Lower leg skin (tissue), 4 donors: ENCODE measurements at regions of chr7 and their contacts with region 1.

Region 1: GRCh38 chr7:101140339-101140699 is 13.4 kb downstream of the SERPINE1 start:
- DNase-seq: no peak
- H3K4me3 ChIP-seq: no peak overlapping the region
- CTCF ChIP-seq: no peak
- POLR2A ChIP-seq: no peak

Region 2: DNA sequence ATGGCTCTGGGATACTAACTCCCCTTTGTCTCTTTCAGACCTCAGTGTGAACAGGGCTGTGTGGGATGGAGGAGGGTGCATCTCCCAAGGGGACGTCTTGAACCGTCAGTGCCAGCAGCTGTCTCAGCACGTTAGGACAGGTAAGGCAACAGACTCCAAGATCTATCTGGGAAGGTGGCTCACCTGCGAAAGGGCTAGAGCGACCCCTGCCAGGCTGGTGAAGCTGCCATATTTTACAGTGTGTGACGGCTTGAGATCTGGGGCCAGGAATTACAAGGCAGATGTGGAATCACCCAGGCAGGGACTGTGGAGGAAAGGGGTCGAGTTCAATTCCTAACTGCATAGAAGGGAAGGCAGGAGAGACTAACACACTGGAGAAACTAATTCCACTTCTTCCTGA is 109.2 kb before region 1 on chr7:
- intact Hi-C with region 1: no loop called
- DNase-seq: no peak
- H3K4me3 ChIP-seq: no peak overlapping the region
- CTCF ChIP-seq: no peak
- POLR2A ChIP-seq: no peak

Region 3: DNA sequence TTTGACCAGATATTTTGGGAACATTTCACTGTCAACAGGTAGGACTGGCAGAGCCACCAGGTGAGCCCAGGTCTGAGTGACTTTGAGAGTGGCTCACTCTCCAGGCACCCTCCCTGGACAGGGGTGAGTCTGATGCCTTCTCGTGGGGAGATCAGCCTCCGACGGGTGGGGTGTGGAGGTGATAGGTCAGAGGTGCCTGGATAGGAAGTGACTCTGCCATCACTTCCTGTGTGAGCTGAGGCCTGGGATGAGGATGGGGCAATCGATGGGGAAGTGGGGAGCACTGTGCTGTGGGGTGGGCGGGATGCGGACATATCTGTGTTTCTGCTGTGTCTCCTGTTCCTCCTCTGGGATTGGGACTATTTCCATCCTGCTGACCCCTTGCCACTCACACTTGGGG is 146.7 kb after region 1 on chr7:
- intact Hi-C with region 1: loop called (anchors 10 kb)
- DNase-seq: no peak
- H3K4me3 ChIP-seq: no peak overlapping the region
- CTCF ChIP-seq: no peak
- POLR2A ChIP-seq: no peak

Region 4: DNA sequence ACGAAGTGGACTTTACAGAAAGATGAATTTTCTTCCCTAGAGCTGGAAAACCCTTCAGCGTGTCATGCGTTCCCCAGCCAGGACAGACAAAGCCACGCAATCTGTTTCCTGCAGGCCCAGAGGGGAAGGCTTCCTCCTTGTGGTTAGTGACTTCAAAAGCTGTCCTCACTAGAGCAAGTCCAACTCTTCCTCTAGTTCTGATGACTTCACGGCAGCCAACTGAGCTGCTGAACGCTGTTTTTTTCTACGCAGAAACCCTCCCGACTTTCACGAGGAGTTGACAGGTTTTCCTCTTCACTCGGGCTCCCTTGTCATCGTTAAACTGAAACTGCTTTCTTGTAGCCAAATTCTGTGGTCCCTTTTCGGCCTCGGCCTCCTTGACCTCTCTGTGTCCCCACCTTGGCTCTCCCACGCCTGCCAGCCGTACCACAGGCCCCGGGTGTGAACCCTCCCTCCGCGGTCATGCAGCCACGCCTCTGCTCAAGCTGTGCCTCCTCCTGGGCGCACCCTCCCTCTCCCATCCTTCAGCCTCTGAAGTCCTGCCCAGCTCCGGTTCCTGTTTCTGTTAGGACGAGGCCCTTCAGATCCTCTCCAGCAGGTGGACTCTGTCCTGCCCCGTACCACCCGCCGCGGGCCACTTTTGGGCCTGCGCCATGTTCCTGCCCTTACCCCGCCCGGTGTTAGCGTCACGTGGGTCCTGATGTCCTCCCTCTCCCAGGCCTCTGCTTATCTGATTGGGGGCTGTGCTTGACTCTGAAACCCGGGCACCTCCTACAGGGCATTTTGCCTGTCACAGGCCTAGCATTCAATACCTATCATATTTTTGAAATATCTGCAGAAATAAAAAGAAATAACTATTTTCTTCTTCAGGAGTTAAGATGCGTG is 716.4 kb after region 1 on chr7:
- intact Hi-C with region 1: no loop called
- DNase-seq: peak; percentile 73 to 94
- H3K4me3 ChIP-seq: no peak overlapping the region
- CTCF ChIP-seq: no peak
- POLR2A ChIP-seq: no peak